ENCODE measurements at regions of chr17 and their contacts with region 1.

Region 1: DNA sequence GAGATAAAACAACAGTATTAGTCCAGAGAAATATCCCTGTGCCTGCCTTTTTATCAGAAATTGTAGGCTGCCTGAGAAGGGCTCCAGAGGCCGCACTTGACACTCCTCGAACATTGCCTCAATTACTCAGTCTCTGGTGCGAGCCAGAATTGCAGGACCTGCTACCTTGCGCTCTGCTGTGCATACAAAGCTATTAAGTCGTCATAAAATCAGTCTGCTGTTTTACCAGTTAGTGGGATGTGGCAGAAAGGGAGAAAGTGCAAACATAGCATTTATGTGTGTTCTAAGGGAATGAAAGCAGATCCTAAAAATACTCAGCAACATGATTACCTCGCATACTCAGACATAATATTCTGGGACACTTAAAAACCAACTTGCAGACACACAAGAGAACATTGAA is 70.6 kb downstream of the TMC6 start:
- DNase-seq: peak in 1 of 2 donors; percentile 44
- ATAC-seq: peak; percentile 61 to 70
- H3K4me3 ChIP-seq: peak overlapping the region in 1 of 4 donors; percentile 3
- H3K27ac ChIP-seq: peak overlapping the region; percentile 82 to 88 (median 86)
- H3K4me1 ChIP-seq: peaks cover 61 to 62% of the 10 kb centered on the region in 2 donors
- H3K27me3 ChIP-seq: no peaks in the 10 kb centered on the region
- CTCF ChIP-seq: no peak
- POLR2A ChIP-seq: no peak

Region 2: GRCh38 chr17:78019367-78019975 is 38.5 kb before region 1 on chr17:
- in situ Hi-C with region 1: no loop called
- intact Hi-C with region 1: loop called (anchors 5 kb)
- DNase-seq: no peak
- ATAC-seq: peak in 1 of 2 donors; percentile 38
- H3K4me3 ChIP-seq: no peak overlapping the region
- H3K27ac ChIP-seq: peak overlapping the region in 3 of 4 donors; percentile 32 to 56 (median 51)
- H3K4me1 ChIP-seq: peaks cover 17 to 20% of the 10 kb centered on the region in 2 donors
- H3K27me3 ChIP-seq: no peaks in the 10 kb centered on the region
- CTCF ChIP-seq: peak; percentile 58 to 74 (median 60)
- POLR2A ChIP-seq: no peak

Region 3: GRCh38 chr17:78092794-78093324 is 34.9 kb after region 1 on chr17:
- in situ Hi-C with region 1: no loop called
- intact Hi-C with region 1: no loop called
- DNase-seq: no peak
- ATAC-seq: no peak
- H3K4me3 ChIP-seq: no peak overlapping the region
- H3K27ac ChIP-seq: no peak overlapping the region
- H3K4me1 ChIP-seq: peaks cover 6 to 14% of the 10 kb centered on the region in 2 donors
- H3K27me3 ChIP-seq: no peaks in the 10 kb centered on the region
- CTCF ChIP-seq: no peak
- POLR2A ChIP-seq: no peak